CD4-positive, alpha-beta T cell (primary cell): ENCODE measurements at regions of chrX and their contacts with region 1.

Region 1: DNA sequence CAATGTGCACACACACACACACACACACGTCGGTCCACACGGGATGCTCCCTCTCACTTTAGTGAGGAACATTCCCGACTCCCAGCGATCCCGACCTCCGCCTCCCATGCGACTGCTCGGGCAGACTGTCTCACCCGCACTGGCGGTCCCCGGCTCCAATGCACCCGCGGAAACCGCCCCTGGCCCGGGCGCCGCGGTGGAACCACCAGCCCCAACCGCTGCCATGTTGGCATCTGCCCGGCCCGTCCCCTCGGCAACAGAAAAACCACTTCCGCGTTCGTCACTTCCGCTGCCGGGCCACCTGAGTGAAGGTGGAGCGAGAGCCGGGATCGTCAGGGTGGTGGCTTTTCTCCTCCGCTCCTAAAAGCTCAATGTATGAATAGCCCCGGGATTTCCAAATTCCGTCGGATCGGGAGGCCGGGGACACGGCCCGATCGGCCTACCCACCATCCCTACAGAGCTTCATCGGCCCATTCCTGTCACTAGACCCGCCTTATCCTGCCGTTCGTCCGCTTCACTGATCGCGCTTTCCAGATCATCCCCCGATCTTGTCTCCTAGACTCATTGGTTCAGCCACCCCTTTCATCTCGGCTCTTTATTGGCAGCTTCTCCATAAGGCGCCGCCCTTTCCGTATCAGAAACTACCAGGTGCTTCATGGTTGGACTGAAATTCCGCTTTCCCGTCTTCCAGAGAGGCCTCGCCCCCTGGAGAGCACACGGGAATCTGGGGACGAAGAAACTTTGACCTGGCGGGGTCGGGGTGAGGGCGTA is at the start of gene SLC35A2:
- DNase-seq: peak; percentile 83 to 93 (median 86)
- ATAC-seq: peak; percentile 74
- H3K4me3 ChIP-seq: peak within 1 kb of the TSS; percentile 75
- H3K4me3 Mint-ChIP-seq: peak within 1 kb of the TSS; percentile 88
- H3K27ac ChIP-seq: peak within 1 kb of the TSS; percentile 79 to 86
- H3K27ac Mint-ChIP-seq: peak within 1 kb of the TSS; percentile 94
- H3K4me1 ChIP-seq: peaks cover 61% of the 10 kb centered on the region
- H3K4me1 Mint-ChIP-seq: peaks cover 50% of the 10 kb centered on the region
- H3K27me3 ChIP-seq: no peaks in the 10 kb centered on the region
- H3K27me3 Mint-ChIP-seq: peaks cover 5% of the 10 kb centered on the region
- CTCF ChIP-seq: no peak
- total RNA-seq, gene SLC35A2: 19.1 to 21.8 TPM

Region 2: GRCh38 chrX:48891402-48892288 is 20.0 kb before region 1 on chrX:
- CTCF ChIA-PET with region 1: interaction called, 15 read pairs
- POLR2A ChIA-PET with region 1: interaction called, 19 read pairs
- intact Hi-C with region 1: loop called (anchors 2 kb)
- DNase-seq: peak; percentile 52 to 90 (median 72)
- ATAC-seq: peak; percentile 88
- H3K4me3 ChIP-seq: peak overlapping the region; percentile 60
- H3K4me3 Mint-ChIP-seq: peak overlapping the region; percentile 86
- H3K27ac ChIP-seq: peak overlapping the region in 1 of 2 donors; percentile 29
- H3K27ac Mint-ChIP-seq: peak overlapping the region; percentile 71
- H3K4me1 ChIP-seq: peaks cover 27% of the 10 kb centered on the region
- H3K4me1 Mint-ChIP-seq: peaks cover 26% of the 10 kb centered on the region
- H3K27me3 ChIP-seq: no peaks in the 10 kb centered on the region
- H3K27me3 Mint-ChIP-seq: no peaks in the 10 kb centered on the region
- CTCF ChIP-seq: peak; percentile 40

Region 3: DNA sequence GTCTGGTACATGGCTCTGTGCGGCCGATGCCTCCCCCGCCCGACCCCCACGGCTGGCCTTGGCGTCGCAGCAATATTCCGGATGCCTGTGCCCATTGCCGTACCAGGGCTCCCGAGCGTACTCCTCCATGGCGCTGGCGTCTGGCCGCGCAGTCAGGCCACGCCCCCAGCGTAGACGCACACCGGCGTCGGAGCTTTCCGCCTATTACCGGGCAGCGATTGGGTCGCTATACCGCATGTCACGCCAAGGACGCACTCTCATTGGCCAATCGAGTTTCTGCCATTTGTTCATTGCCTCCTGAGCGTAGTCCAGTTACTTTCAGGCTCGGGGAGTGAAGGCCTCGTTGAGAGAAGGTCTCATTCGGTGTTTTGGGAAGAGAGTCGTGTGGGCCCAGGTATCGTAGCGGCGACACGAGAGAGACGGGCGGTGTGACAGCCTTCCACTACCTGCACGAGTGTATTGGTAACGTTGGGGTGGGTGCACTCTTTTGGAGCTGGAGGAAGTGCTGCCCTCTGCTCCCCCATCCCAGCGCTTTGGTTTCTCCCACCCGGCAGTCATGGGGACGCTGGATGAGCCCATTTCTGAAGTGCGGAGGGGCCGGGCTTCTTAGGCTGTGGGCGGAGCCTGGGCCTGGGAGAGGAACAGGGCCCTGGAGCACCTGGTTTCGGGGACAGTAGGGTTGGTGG is 13.8 kb before region 1 on chrX and contains the starts of genes PQBP1 and TIMM17B:
- CTCF ChIA-PET with region 1: interaction called, 15 read pairs
- POLR2A ChIA-PET with region 1: interaction called, 44 read pairs
- intact Hi-C with region 1: loop called (anchors 2 kb)
- DNase-seq: peak; percentile 73 to 96 (median 84)
- ATAC-seq: peak; percentile 84
- H3K4me3 ChIP-seq: peak within 1 kb of the TSS; percentile 91
- H3K4me3 Mint-ChIP-seq: peak within 1 kb of the TSS; percentile 91
- H3K27ac ChIP-seq: peak within 1 kb of the TSS; percentile 93 to 98
- H3K27ac Mint-ChIP-seq: peak within 1 kb of the TSS; percentile 90
- H3K4me1 ChIP-seq: peaks cover 33% of the 10 kb centered on the region
- H3K4me1 Mint-ChIP-seq: peaks cover 27% of the 10 kb centered on the region
- H3K27me3 ChIP-seq: no peaks in the 10 kb centered on the region
- H3K27me3 Mint-ChIP-seq: no peaks in the 10 kb centered on the region
- CTCF ChIP-seq: no peak
- total RNA-seq, gene PQBP1: 73.0 to 76.6 TPM
- total RNA-seq, gene TIMM17B: 40.0 to 40.3 TPM

Region 4: GRCh38 chrX:48937054-48937907 is 25.7 kb after region 1 on chrX:
- CTCF ChIA-PET with region 1: interaction called, 8 read pairs
- POLR2A ChIA-PET with region 1: interaction called, 335 read pairs
- intact Hi-C with region 1: no loop called
- DNase-seq: peak; percentile 77 to 94 (median 88)
- ATAC-seq: peak; percentile 68
- H3K4me3 ChIP-seq: peak overlapping the region; percentile 49
- H3K4me3 Mint-ChIP-seq: peak overlapping the region; percentile 82
- H3K27ac ChIP-seq: peak overlapping the region; percentile 92 to 93
- H3K27ac Mint-ChIP-seq: peak overlapping the region; percentile 98
- H3K4me1 ChIP-seq: peaks cover 85% of the 10 kb centered on the region
- H3K4me1 Mint-ChIP-seq: peaks cover 90% of the 10 kb centered on the region
- H3K27me3 ChIP-seq: no peaks in the 10 kb centered on the region
- H3K27me3 Mint-ChIP-seq: no peaks in the 10 kb centered on the region
- CTCF ChIP-seq: peak; percentile 40

Region 5: GRCh38 chrX:48945516-48946348 is 34.1 kb after region 1 on chrX:
- CTCF ChIA-PET with region 1: interaction called, 3 read pairs
- POLR2A ChIA-PET with region 1: interaction called, 335 read pairs
- intact Hi-C with region 1: loop called in 1 of 2 experiments (anchors 5 kb)
- DNase-seq: peak; percentile 30 to 75 (median 52)
- ATAC-seq: peak; percentile 67
- H3K4me3 ChIP-seq: no peak overlapping the region
- H3K4me3 Mint-ChIP-seq: no peak overlapping the region
- H3K27ac ChIP-seq: peak overlapping the region in 1 of 2 donors; percentile 22
- H3K27ac Mint-ChIP-seq: peak overlapping the region; percentile 74
- H3K4me1 ChIP-seq: peaks cover 74% of the 10 kb centered on the region
- H3K4me1 Mint-ChIP-seq: peaks cover 49% of the 10 kb centered on the region
- H3K27me3 ChIP-seq: no peaks in the 10 kb centered on the region
- H3K27me3 Mint-ChIP-seq: no peaks in the 10 kb centered on the region
- CTCF ChIP-seq: peak; percentile 71